PC-3 (cell line): ENCODE measurements at regions of chr11 and their contacts with region 1.

Region 1: DNA sequence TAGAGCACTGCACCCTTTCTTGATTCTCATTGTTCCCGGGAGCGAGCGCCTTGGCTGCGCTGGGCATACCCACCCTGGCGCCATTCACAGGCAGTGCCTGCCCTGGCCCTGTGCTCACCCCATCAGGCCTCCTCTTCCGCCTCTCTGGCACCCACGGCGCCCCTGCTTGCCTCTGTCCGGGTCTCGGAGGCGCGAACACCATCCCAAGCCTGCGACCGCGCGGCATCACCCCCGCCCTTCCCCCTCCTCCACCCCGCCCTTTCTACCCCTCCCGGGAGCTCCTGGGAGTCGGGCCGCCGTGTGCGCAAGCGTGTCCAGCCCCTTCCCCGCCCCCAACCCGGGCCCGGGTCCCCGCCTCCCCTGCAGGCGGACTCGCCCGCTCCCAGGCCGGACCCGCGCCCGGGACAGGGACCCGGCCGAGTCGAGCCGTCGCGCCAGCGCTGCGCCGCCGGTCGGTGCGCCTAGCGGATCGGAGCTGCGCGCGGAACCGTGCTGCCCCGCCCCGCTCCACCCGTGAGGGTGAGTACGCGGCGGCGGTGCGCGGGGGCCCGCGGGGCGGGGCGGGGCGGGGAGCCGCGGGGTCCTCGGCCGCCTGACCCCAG is at the start of gene ST3GAL4:
- DNase-seq: peak; percentile 83
- ATAC-seq: peak; percentile 64
- H3K4me3 ChIP-seq: peak within 1 kb of the TSS; percentile 83
- H3K27ac ChIP-seq: peak within 1 kb of the TSS; percentile 78
- H3K4me1 ChIP-seq: peaks cover 62% of the 10 kb centered on the region
- H3K27me3 ChIP-seq: no peaks in the 10 kb centered on the region
- CTCF ChIP-seq: no peak
- total RNA-seq, gene ST3GAL4: 126 and 148 TPM in 2 replicates

Region 2: DNA sequence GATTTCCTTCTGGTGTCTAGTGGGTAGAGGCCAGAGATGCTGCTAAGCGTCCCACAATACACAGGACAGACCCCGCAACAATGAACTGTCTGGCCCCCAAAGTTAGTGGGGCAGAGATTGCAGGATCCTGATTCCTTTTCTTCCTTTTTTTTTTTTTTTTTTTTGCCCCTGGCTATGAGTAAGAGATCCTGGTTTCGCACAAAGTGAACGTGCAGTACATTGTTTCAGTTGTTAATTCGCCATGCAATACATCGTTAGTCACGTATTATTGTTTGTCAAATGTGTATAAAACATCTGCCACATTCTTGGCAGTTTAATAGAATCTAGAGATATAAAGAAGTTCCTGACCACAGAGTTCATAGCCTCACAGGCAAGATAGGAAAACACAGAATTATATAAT is 20.3 kb after region 1 on chr11:
- CTCF ChIA-PET with region 1: no interaction called
- POLR2A ChIA-PET with region 1: no interaction called
- intact Hi-C with region 1: no loop called
- DNase-seq: peak; percentile 71
- ATAC-seq: peak; percentile 7
- H3K4me3 ChIP-seq: no peak overlapping the region
- H3K27ac ChIP-seq: no peak overlapping the region
- H3K4me1 ChIP-seq: peaks cover 33% of the 10 kb centered on the region
- H3K27me3 ChIP-seq: no peaks in the 10 kb centered on the region
- CTCF ChIP-seq: no peak

Region 3: DNA sequence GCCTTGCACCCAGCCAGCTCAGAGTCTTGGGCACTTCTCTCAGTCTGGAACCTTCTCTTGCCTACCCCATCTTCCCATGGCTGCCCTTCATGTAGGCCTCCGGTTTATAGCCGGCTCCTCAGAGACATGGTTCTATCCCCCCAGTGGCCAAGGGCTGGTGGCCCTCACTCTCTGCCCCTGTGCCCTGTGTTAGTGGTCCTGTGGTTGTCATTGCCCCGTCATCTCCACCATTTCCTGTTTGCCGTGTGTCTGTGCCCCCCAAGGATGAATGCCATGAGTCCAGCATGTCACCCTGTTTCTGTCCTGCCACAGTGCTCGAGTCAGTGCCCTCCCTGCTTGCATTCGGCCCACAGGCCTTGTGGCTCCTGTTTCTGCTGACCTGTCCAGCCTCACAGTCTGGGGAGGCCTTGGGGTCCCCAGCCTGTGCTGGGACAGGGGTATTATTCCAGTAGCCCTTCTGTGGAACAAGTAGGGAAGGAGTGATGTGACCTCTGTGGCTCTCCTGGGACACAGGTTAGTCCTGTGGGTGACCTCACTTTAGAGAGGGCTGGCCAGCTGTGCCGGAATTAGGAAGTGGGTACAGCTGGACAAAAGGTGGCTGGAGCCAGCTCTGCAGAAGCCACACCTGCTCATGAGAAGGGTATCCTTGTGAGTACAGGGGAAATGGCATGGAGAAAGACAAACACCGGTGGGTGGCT is 30.8 kb after region 1 on chr11:
- CTCF ChIA-PET with region 1: no interaction called
- POLR2A ChIA-PET with region 1: no interaction called
- intact Hi-C with region 1: loop called (anchors 5 kb)
- DNase-seq: no peak
- ATAC-seq: peak; percentile 78; the same call in 1 of the 2 replicates
- H3K4me3 ChIP-seq: no peak overlapping the region
- H3K27ac ChIP-seq: peak overlapping the region; percentile 87
- H3K4me1 ChIP-seq: peaks cover 56% of the 10 kb centered on the region
- H3K27me3 ChIP-seq: no peaks in the 10 kb centered on the region
- CTCF ChIP-seq: no peak

Region 4: DNA sequence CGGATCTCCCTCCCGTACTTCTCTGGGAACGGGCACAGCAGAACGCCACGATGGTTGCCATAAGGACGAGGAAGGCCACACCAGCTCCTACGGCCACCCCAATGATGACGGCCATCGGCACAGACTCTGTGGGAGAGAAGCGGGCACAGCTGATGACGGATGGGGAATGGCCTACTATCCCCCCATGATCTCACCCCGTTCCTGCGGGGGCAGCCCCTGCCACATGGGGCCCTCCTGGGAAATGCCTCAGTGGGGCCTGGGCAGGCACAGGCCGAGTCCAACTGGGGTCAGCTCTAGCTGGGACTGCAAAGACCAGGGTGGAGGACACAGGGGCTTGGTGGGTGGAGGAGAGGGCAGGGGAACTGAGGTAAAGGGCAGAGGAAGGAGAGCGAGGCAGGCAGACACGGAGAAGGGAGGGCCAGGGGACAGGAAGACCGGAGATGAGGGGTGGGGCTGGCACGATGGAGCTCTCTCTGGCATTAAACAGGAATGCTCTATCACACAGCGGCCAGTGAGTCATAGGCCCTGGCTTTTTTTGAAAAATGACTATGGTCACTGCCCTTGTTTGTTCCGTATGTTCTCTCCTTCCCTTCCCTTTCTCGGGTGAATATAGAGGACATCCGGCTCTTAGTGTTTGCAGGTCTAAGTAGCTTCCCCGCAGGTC is 76.1 kb after region 1 on chr11:
- CTCF ChIA-PET with region 1: no interaction called
- POLR2A ChIA-PET with region 1: no interaction called
- intact Hi-C with region 1: loop called (anchors 2 kb)
- DNase-seq: peak; percentile 98
- ATAC-seq: peak; percentile 86
- H3K4me3 ChIP-seq: no peak overlapping the region
- H3K27ac ChIP-seq: peak overlapping the region; percentile 93
- H3K4me1 ChIP-seq: peaks cover 25% of the 10 kb centered on the region
- H3K27me3 ChIP-seq: no peaks in the 10 kb centered on the region
- CTCF ChIP-seq: no peak

Region 5: DNA sequence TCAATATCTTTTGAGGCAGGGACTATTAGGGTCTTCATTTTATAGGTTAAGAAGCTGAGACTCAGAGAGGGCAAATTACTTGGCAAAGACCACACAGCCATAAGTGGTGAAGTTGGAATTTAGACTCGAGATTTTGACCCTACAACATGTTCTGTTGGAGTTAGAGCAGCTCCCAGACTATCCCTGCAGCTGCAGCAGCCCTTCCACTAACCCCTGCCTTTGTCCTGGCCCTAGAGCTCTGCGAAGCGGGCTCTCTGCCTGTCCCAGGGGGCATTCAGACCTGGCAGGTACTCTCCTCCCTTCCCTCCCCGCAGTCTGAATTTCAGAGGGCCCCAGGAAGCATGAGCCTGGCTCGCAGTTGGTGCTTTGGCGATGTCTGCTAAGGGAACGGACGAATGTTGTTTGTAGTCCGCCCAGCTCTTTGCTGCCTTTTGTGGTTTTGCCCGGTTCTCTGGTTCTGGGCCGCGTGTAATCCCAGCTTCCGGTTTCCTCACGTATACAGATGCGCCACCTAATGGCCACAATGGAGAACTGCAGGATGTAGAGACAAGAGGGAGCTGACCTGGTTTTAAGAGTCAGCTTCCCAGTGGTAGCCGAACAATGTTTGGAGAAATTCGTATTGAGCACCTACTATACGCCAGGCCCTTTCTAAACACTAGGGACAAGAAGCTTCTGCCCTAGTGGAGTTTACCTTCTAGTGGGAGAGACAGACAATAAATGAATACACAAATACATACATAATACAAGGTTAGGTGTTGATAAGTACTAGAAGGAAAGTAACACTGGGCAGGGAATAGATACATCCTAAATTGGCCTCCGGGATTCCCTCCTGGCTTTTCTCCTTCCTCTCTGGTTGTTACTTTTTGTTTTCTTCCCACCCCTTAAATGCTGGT is 125.2 kb after region 1 on chr11:
- CTCF ChIA-PET with region 1: interaction called, 6 read pairs
- POLR2A ChIA-PET with region 1: interaction called, 3 read pairs
- intact Hi-C with region 1: loop called (anchors 1 kb)
- DNase-seq: peak; percentile 93
- ATAC-seq: peak; percentile 74
- H3K4me3 ChIP-seq: peak overlapping the region; percentile 30; the same call in 1 of the 2 replicates
- H3K27ac ChIP-seq: no peak overlapping the region
- H3K4me1 ChIP-seq: peaks cover 15% of the 10 kb centered on the region
- H3K27me3 ChIP-seq: no peaks in the 10 kb centered on the region
- CTCF ChIP-seq: peak; percentile 98